Activated naive CD4-positive, alpha-beta T cell treated with anti-CD3 and anti-CD28 coated beads for 36 hours (primary cell): ENCODE measurements at regions of chr4 and their contacts with region 1.

Region 1: DNA sequence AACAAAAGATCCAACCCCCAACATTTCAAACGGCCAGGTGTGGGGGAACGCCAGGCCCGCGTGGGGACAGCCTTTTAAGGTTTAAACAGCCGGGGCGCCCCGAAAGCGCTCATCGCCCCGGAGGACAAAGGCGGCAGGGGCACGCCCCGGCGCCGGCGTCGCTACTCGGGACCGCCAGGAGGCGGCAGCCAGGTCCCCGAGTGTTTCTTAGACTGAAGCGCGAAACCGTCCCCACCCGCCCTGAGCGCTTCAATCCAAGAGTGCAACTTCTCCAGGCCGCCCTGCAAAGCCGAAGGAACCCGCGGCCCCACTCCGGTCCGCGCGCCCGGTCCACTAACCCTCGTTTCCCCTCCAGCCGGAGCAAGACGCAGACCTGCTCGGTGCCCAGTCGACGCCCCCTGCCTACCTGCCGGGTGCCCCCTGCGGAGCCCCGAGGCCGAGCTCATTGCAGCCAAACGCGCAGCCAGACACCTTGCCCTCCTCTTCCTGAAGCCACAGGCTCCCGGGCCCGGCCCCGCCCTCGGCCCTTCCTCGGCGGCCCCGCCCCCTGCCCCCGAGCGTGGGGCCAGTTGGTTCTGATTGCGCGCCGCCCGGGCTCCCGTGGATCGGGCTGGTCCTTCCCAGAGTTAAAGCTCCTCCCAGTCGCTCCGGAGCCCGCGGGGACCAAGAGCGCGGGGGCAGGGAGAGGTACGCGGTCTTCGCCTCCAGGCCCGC is at the start of gene CASP6:
- DNase-seq: peak; percentile 76
- H3K4me3 Mint-ChIP-seq: peak within 1 kb of the TSS; percentile 86
- H3K27ac Mint-ChIP-seq: peak within 1 kb of the TSS; percentile 82
- H3K4me1 Mint-ChIP-seq: peaks cover 28% of the 10 kb centered on the region
- H3K27me3 Mint-ChIP-seq: no peaks in the 10 kb centered on the region
- total RNA-seq, gene CASP6: 11.5 to 12.1 TPM

Region 2: DNA sequence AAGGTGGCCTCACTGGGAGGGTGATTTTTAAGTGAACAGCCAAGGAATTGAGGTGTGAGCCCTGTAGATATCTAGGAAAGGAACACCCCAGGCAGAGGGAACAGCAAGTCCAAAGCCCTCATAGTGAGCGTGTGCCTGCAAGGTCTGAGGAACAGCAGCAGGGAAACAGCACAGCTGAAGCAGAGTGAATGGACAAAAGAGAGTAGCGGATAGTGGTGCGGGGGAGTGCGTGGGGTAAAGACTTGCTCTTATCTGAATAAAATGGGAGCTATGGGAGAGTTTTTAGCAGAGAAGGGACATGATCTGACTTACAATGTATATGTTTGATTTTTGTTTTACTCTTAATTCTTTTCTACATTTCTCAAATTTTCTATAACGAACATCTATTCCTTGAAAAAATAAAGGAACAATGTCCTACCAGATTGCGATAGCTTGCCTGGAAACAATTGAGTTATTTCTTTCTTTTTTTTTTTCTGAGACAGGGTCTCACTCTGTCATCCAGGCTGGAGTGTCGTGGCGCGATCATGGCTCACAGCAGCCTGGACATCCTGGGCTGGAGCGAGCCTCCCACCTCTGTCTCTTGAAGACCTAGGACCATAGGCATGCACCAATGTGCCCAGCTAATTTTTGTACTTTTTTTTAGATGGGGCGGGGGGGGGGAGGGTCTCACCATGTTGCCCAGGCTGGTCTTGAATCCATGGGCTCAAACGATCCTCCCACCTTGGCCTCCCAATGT is 1732.9 kb before region 1 on chr4:
- CTCF ChIA-PET with region 1: no interaction called
- intact Hi-C with region 1: no loop called
- DNase-seq: no peak
- H3K4me3 Mint-ChIP-seq: no peak overlapping the region
- H3K27ac Mint-ChIP-seq: no peak overlapping the region
- H3K4me1 Mint-ChIP-seq: peaks cover 2% of the 10 kb centered on the region
- H3K27me3 Mint-ChIP-seq: no peaks in the 10 kb centered on the region

Region 3: GRCh38 chr4:109729718-109730618 is 26.9 kb after region 1 on chr4 and contains the start of gene PLA2G12A:
- CTCF ChIA-PET with region 1: interaction called, 6 read pairs
- intact Hi-C with region 1: loop called (anchors 1 kb)
- DNase-seq: peak; percentile 66
- H3K4me3 Mint-ChIP-seq: peak within 1 kb of the TSS; percentile 87
- H3K27ac Mint-ChIP-seq: peak within 1 kb of the TSS; percentile 39
- H3K4me1 Mint-ChIP-seq: peaks cover 15% of the 10 kb centered on the region
- H3K27me3 Mint-ChIP-seq: no peaks in the 10 kb centered on the region
- total RNA-seq, gene PLA2G12A: 22.8 to 24.3 TPM

Region 4: DNA sequence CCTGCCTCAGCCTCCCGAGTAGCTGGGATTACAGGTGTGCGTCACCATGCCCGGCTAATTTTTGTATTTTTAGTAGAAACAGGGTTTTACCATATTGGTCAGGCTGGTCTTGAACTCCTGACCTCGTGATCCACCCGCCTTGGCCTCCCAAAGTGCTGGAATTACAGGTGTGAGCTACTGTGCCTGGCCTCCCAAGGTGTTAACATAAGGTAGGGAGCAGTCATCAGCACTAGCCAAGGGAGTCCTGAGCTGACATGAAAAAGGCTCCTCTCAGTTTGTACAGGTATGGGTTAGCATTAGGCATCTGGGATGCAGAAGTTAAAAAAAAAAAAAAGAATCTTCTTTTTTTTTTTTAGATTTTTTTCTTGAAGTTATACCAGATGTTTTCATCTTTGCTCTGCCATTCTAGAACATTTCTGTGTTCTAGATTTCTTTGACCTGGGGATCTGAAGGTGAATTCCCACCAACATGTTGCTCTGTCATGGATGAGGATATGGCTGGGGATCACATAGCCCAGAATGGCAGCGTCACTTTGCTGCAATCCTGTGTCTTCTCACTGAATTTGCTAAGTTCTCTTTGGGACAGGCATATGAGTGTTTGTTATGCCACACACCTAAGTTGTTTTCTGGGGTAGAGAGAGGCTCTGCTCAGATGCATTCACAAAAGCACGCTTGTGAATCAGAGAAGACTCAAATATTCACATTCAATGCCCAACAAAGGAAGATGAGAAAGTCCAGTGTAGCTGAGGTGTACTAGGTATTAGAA is 51.2 kb after region 1 on chr4:
- CTCF ChIA-PET with region 1: no interaction called
- intact Hi-C with region 1: loop called (anchors 2 kb)
- DNase-seq: no peak
- H3K4me3 Mint-ChIP-seq: no peak overlapping the region
- H3K27ac Mint-ChIP-seq: no peak overlapping the region
- H3K4me1 Mint-ChIP-seq: no peaks in the 10 kb centered on the region
- H3K27me3 Mint-ChIP-seq: no peaks in the 10 kb centered on the region

Region 5: GRCh38 chr4:110208419-110208818 is 505.3 kb after region 1 on chr4:
- CTCF ChIA-PET with region 1: no interaction called
- intact Hi-C with region 1: no loop called
- DNase-seq: no peak
- H3K4me3 Mint-ChIP-seq: no peak overlapping the region
- H3K27ac Mint-ChIP-seq: no peak overlapping the region
- H3K4me1 Mint-ChIP-seq: no peaks in the 10 kb centered on the region
- H3K27me3 Mint-ChIP-seq: no peaks in the 10 kb centered on the region